ENCODE measurements at regions of chr6 and their contacts with region 1.

Region 1: DNA sequence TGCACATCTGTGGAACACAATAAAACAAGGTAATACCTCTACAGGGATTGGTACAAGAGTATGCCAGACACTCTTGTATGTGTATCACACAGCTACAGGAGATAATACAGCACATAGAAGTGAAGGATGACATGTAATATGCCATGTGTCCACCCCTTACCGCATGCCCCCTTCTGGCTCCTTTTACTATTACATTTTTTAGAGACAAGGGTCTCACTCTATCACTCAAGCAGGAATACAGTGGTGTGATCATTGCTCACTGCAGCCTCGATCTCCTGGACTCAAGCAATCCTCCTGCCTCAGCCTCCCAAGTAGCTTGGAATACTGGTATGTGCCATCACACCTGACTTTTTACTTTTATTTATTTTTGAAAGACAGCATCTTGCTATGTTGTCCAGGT is 4.2 kb upstream of the NCR3 start:
- H3K4me3 ChIP-seq: no peak overlapping the region
- H3K27ac ChIP-seq: no peak overlapping the region
- H3K4me1 ChIP-seq: no peaks in the 10 kb centered on the region
- CTCF ChIP-seq: peak; percentile 35; the same call in 1 of the 2 replicates

Region 2: DNA sequence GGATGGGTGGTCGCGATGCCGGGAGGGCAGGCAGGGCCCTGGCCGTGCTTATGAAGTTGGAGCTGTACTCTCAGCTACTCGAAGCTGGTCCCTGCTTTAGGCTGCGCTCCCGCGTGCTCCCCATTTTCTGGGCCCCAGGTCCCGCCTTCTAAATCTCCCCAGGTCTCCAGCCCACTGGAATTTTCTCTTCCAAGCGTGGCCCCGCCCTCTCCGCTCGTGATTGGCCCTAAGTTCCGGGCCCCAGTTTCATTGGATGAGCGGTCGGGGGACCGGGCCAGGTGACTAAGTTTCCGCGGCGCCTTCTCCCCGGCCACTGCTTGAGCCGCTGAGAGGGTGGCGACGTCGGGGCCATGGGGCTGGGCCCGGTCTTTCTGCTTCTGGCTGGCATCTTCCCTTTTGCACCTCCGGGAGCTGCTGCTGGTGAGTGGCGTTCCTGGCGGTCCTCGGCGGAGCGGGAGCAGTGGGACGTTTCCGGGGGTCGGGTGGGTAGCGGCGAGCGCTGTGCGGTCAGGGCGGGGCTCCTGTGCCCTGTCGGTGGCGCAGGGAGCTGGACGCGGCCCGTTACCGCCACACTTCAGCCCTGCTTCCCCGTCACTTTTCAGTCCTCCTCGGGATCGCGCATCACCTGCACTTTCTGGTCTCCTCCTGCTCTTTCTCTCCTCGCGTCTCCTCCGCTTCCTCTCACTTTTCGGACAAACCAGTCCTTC is 193.6 kb before region 1 on chr6 and contains the start of gene MICA:
- CTCF ChIA-PET with region 1: interaction called, 39 read pairs
- POLR2A ChIA-PET with region 1: no interaction called
- H3K4me3 ChIP-seq: peak within 1 kb of the TSS; percentile 84
- H3K27ac ChIP-seq: peak within 1 kb of the TSS; percentile 63; the same call in 1 of the 2 replicates
- H3K4me1 ChIP-seq: peaks cover 5% of the 10 kb centered on the region; the same call in 1 of the 2 replicates
- CTCF ChIP-seq: peak; percentile 84

Region 3: GRCh38 chr6:31541658-31542521 is 55.1 kb before region 1 on chr6 and contains the start of gene DDX39B:
- CTCF ChIA-PET with region 1: interaction called, 431 read pairs
- POLR2A ChIA-PET with region 1: interaction called, 17 read pairs
- H3K4me3 ChIP-seq: peak within 1 kb of the TSS; percentile 64
- H3K27ac ChIP-seq: peak within 1 kb of the TSS; percentile 100
- H3K4me1 ChIP-seq: peaks cover 14% of the 10 kb centered on the region
- CTCF ChIP-seq: no peak

Region 4: DNA sequence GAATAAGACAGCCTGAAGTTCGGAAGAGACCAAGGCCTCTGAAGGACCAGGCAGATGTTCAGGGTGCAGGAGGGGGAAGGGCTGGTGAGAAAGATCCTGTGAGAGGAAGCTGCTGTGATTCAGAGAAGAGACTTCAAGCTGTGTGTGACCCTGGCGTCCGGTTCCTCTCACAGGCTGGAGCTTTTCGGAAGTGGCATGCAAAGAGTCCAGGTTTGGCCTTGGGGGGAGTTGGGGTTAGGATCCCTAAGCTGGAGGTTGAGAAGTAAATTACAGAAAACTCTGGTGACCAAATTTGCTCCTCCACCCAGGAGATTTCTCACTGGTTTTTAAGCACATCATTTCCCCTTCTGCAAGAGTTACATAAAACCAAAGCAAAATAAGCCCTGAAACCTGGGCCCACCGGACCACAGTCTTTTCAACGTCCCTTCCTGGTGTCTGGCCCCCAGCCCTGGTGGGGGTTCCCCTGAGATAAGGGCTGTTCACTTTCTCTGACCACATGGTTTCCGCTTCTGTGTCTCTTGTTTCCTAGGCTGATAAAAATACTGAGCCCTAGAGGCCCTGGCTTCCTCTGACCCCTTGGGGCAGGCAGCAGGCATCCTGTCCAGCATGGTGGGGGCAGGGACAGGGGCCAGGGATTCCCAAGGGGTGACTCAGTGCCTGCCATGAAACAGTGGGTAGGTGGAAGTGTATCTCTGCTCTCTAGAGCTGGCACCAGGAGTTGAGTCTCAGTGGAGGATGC is 36.9 kb before region 1 on chr6:
- CTCF ChIA-PET with region 1: interaction called, 29 read pairs
- POLR2A ChIA-PET with region 1: interaction called, 3 read pairs
- H3K4me3 ChIP-seq: no peak overlapping the region
- H3K27ac ChIP-seq: no peak overlapping the region
- H3K4me1 ChIP-seq: no peaks in the 10 kb centered on the region
- CTCF ChIP-seq: no peak

Region 5: DNA sequence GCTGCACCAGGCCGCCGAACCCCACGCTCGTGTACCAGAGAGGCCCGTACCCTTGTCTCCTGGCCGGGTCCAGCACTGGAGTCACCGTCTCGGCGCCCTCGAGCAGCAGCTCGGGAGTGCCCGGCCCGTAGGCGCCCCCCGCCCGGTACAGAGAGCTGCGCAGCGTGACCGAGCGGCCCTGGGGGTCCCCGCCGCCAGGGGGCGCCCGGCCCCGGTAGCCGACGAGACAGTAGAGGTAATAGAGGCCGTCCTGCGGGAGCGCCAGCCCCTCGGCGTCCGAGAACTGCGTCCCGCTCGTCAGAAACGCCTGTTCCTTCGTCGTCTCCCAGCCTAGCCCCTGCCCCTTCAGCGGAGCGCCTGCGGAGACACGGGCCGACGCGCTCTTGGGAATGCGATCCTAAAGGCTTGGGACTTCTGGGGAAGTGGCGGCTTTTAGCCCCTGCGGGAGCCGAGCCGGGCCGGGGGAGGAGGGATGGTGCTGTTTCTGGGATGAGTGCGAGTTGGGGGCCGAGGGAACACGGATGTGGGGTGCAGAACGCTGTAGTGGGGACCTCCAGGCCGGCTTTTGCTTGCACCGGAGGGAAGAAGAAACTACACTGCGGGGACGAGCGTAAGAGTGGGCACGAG is 16.1 kb before region 1 on chr6:
- CTCF ChIA-PET with region 1: interaction called, 518 read pairs
- POLR2A ChIA-PET with region 1: interaction called, 6 read pairs
- H3K4me3 ChIP-seq: peak overlapping the region; percentile 44
- H3K27ac ChIP-seq: peak overlapping the region; percentile 34; the same call in 1 of the 2 replicates
- H3K4me1 ChIP-seq: peaks cover 4% of the 10 kb centered on the region; the same call in 1 of the 2 replicates
- CTCF ChIP-seq: peak; percentile 98

Region 6: GRCh38 chr6:31619805-31620585 is 23.0 kb after region 1 on chr6:
- CTCF ChIA-PET with region 1: interaction called, 22 read pairs
- POLR2A ChIA-PET with region 1: interaction called, 5 read pairs
- H3K4me3 ChIP-seq: peak overlapping the region; percentile 66
- H3K27ac ChIP-seq: peak overlapping the region; percentile 99
- H3K4me1 ChIP-seq: peaks cover 7% of the 10 kb centered on the region; the same call in 1 of the 2 replicates
- CTCF ChIP-seq: no peak

Measured in HEK293 (cell line).